B cell (primary cell): ENCODE measurements at regions of chr6 and their contacts with region 1.

Region 1: DNA sequence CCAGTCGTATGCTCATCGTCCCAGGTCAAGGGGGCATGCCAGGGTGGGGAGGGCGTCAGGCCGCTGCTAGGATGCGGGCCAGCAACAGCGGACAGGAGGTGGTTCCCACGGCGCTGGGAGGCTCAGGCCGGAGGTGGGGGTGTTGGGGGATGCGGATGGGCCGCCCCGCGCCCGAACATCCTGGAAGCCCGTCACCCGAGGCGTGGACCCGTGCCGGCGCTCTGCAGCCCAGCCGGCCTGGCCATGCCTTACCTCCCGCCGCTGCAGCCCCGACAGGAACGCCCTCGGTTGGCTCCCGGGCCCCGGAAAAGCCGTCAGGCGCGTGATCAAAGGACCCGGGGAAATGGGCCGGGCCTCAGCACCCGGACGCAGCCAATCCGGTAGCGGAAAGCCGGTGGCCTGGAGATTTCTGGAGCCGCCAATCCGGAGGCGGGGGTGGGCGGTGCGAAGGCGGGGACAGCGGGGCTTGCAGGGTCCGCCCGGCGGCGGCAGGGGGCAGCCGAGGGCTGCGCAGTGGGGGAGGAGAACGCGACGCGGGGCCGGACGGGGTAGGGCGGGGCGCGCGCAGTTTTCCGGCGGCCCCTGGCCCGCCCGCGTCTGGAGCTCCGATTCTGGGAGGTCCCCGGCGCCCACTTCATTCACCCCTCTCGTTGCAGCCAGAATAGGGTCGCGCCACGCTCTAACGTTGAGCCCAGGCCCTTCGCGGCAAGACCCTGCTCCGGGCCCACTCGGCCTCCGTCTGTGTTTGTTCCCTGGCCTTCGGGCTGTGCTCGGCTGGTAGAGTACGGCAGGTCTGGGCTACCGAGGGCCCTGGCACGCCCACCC is at the start of gene SMIM29:
- DNase-seq: peak; percentile 97
- ATAC-seq: peak; percentile 91
- H3K4me3 ChIP-seq: peak within 1 kb of the TSS; percentile 78 to 97 (median 91)
- H3K4me3 Mint-ChIP-seq: peak within 1 kb of the TSS; percentile 99
- H3K27ac ChIP-seq: peak within 1 kb of the TSS; percentile 92 to 93
- H3K27ac Mint-ChIP-seq: peak within 1 kb of the TSS; percentile 97
- H3K4me1 ChIP-seq: peaks cover 14 to 32% of the 10 kb centered on the region in 2 donors
- H3K4me1 Mint-ChIP-seq: peaks cover 41% of the 10 kb centered on the region
- H3K27me3 ChIP-seq: no peaks in the 10 kb centered on the region
- H3K27me3 Mint-ChIP-seq: no peaks in the 10 kb centered on the region
- CTCF ChIP-seq: peak; percentile 89
- total RNA-seq, gene SMIM29: 41.1 and 43.6 TPM in 2 replicates

Region 2: DNA sequence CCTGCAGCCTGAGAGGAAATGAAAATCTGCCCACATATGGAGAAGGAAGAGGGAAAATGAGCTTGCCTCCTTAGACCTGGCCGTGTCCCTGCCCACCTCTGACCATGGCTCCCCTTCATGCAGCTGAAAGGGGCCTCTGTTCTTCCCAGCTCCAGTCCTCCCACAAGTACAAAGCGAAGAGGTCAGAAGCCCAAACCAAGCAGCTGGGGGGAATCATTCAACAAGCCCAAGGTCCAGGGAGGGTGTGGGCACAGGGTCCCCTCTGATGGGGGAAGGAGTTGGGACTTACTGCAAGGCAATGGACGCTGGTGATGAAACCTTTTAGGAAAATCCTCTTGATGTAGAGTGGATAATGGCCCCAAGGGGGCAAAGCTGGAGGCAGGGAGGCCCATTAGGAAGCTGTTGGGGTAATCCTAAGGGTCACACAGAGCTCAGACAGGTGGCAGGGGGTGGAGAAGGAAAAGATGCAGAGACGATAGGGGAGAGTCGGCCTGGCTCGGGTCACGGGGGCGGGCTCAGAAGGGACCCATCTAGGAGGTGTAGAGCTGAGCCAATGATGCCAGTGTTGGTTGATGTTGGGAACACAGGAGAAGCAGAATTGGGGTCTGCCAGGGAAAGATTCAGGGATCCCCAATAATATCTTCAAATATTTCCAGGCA is 87.0 kb before region 1 on chr6:
- CTCF ChIA-PET with region 1: interaction called, 17 read pairs
- POLR2A ChIA-PET with region 1: no interaction called
- intact Hi-C with region 1: loop called (anchors 1 kb)
- DNase-seq: no peak
- ATAC-seq: no peak
- H3K4me3 ChIP-seq: no peak overlapping the region
- H3K4me3 Mint-ChIP-seq: no peak overlapping the region
- H3K27ac ChIP-seq: no peak overlapping the region
- H3K27ac Mint-ChIP-seq: no peak overlapping the region
- H3K4me1 ChIP-seq: no peaks in the 10 kb centered on the region
- H3K4me1 Mint-ChIP-seq: no peaks in the 10 kb centered on the region
- H3K27me3 ChIP-seq: no peaks in the 10 kb centered on the region
- H3K27me3 Mint-ChIP-seq: peaks cover 15% of the 10 kb centered on the region
- CTCF ChIP-seq: no peak

Region 3: GRCh38 chr6:34223956-34224940 is 24.7 kb before region 1 on chr6:
- CTCF ChIA-PET with region 1: interaction called, 19 read pairs
- POLR2A ChIA-PET with region 1: interaction called, 13 read pairs
- intact Hi-C with region 1: loop called (anchors 1 kb)
- DNase-seq: peak; percentile 98
- ATAC-seq: peak; percentile 96
- H3K4me3 ChIP-seq: peak overlapping the region in 4 of 5 experiments; percentile 59 to 76 (median 74)
- H3K4me3 Mint-ChIP-seq: peak overlapping the region; percentile 57
- H3K27ac ChIP-seq: peak overlapping the region; percentile 96 to 99
- H3K27ac Mint-ChIP-seq: peak overlapping the region; percentile 91
- H3K4me1 ChIP-seq: peaks cover 33 to 42% of the 10 kb centered on the region in 2 donors
- H3K4me1 Mint-ChIP-seq: peaks cover 49% of the 10 kb centered on the region
- H3K27me3 ChIP-seq: no peaks in the 10 kb centered on the region
- H3K27me3 Mint-ChIP-seq: no peaks in the 10 kb centered on the region
- CTCF ChIP-seq: no peak

Region 4: GRCh38 chr6:34315780-34316179 is 66.8 kb after region 1 on chr6:
- CTCF ChIA-PET with region 1: interaction called, 6 read pairs
- POLR2A ChIA-PET with region 1: interaction called, 6 read pairs
- intact Hi-C with region 1: loop called (anchors 5 kb)
- DNase-seq: peak; percentile 82
- ATAC-seq: peak; percentile 86
- H3K4me3 ChIP-seq: peak overlapping the region in 4 of 5 experiments; percentile 6 to 45 (median 22)
- H3K4me3 Mint-ChIP-seq: peak overlapping the region; percentile 75
- H3K27ac ChIP-seq: peak overlapping the region; percentile 82 to 89
- H3K27ac Mint-ChIP-seq: peak overlapping the region; percentile 94
- H3K4me1 ChIP-seq: peaks cover 50 to 51% of the 10 kb centered on the region in 2 donors
- H3K4me1 Mint-ChIP-seq: peaks cover 65% of the 10 kb centered on the region
- H3K27me3 ChIP-seq: no peaks in the 10 kb centered on the region
- H3K27me3 Mint-ChIP-seq: no peaks in the 10 kb centered on the region
- CTCF ChIP-seq: no peak

Region 5: DNA sequence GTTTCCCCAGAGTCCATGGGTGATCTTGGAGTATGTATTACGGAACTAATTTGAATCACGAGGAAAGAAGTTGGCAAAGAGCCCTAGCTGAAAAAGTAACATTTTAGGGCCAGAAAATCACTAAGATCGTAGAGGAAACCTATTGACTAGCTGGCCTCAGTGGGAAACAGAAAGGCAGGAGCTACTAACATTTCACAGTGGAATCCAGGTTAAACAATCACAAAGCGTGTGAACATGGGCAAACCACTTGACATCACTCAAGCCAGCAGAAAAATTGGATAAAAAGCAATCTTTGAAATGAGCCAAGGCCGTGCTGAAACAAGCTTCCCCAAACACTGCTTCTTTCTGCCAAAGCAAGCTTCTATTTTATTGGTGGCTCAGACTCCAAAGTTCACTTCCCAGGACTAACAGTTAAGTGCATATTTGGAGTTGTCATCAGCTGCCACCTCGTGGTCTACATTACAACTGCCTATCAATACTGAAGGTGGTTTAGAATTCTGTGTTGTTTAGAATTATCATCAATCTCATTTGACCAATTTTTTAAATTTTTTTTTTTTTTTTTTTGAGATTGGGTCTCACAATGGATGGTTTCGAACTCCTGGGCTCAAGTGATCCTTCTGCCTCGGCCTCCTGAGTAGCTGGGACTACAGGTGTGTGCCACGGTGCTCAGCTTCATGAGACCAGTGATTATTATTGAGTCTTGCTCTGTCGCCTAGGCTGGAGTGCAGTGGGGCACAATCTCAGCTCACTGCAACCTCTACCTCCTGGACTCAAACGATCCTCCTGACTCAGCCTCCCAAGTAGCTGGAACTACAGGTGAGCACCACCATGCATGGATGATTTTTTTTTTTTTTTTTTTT is 166.3 kb after region 1 on chr6:
- CTCF ChIA-PET with region 1: interaction called, 261 read pairs
- POLR2A ChIA-PET with region 1: interaction called, 34 read pairs
- intact Hi-C with region 1: loop called (anchors 1 kb)
- DNase-seq: peak; percentile 78
- ATAC-seq: peak; percentile 85
- H3K4me3 ChIP-seq: no peak overlapping the region
- H3K4me3 Mint-ChIP-seq: no peak overlapping the region
- H3K27ac ChIP-seq: no peak overlapping the region
- H3K27ac Mint-ChIP-seq: no peak overlapping the region
- H3K4me1 ChIP-seq: peaks cover 0 to 4% of the 10 kb centered on the region in 2 donors
- H3K4me1 Mint-ChIP-seq: peaks cover 4% of the 10 kb centered on the region
- H3K27me3 ChIP-seq: no peaks in the 10 kb centered on the region
- H3K27me3 Mint-ChIP-seq: no peaks in the 10 kb centered on the region
- CTCF ChIP-seq: peak; percentile 73

Region 6: DNA sequence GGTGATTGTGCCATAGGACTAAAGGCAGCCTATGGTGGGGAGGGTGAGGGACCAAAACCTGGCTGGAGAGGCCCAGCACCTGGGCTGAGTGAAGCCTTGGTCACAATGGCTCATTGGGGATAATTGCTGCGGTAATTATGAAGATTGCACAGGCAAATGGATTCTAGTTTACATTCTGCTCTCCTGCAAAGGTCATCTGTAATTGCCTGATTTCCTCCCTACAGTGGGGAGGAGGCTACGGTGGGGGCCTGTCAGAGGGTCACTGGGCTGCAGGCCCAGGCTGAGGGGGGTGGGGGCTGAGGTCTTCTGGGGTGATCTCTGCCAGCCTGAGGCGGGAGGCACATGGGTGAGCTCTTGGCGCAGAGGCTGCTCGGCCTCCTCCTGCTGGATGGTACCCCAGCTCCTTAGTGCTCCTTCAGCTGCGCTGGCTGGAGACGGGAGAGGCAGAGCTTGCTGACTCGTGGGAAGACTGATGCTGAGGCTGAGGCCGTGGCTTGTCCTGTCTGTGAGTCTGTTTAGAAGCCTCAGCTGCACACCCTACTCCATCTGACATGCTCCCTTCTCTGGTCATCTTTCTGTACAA is 247.3 kb after region 1 on chr6:
- CTCF ChIA-PET with region 1: no interaction called
- POLR2A ChIA-PET with region 1: no interaction called
- intact Hi-C with region 1: no loop called
- DNase-seq: no peak
- ATAC-seq: no peak
- H3K4me3 ChIP-seq: no peak overlapping the region
- H3K4me3 Mint-ChIP-seq: no peak overlapping the region
- H3K27ac ChIP-seq: no peak overlapping the region
- H3K27ac Mint-ChIP-seq: no peak overlapping the region
- H3K4me1 ChIP-seq: no peaks in the 10 kb centered on the region
- H3K4me1 Mint-ChIP-seq: no peaks in the 10 kb centered on the region
- H3K27me3 ChIP-seq: peaks cover 0 to 6% (median 0%) of the 10 kb centered on the region in 4 experiments
- H3K27me3 Mint-ChIP-seq: no peaks in the 10 kb centered on the region
- CTCF ChIP-seq: no peak

Region 7: DNA sequence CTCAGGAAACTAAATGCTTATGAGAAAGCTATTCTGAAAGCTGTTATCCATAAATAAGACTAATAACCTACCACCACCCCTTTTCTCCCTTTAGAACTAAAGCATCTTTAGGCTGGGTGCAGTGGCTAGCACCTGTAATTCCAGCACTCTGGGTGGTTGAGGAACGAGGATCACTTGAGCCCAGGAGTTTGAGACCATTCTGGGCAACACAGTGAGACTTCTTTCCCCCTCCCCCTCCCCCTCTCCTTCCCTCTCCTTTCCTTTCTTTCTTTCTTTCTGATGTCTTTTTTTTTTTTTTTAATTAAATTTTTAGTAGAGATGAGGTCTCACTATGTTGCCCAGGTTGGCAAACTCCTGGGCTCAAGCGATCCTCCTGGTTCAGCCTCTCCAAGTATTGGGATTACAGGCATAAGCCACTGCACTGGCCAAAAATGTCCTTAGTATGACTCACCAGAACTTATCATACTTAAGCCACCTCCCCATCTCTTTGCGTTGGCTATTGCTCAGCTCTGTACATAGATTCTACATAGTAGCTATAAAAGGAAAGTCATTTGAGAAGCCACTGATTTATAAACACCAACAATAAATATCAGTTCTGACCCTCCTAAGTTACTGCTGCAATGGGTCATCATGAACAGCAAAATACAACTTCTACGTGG is 362.0 kb after region 1 on chr6:
- CTCF ChIA-PET with region 1: interaction called, 37 read pairs
- POLR2A ChIA-PET with region 1: interaction called, 4 read pairs
- intact Hi-C with region 1: loop called (anchors 1 kb)
- DNase-seq: no peak
- ATAC-seq: no peak
- H3K4me3 ChIP-seq: no peak overlapping the region
- H3K4me3 Mint-ChIP-seq: no peak overlapping the region
- H3K27ac ChIP-seq: peak overlapping the region in 1 of 2 donors; percentile 30
- H3K27ac Mint-ChIP-seq: no peak overlapping the region
- H3K4me1 ChIP-seq: no peaks in the 10 kb centered on the region
- H3K4me1 Mint-ChIP-seq: peaks cover 8% of the 10 kb centered on the region
- H3K27me3 ChIP-seq: no peaks in the 10 kb centered on the region
- H3K27me3 Mint-ChIP-seq: no peaks in the 10 kb centered on the region
- CTCF ChIP-seq: no peak